ENCODE measurements at regions of chr17 and their contacts with region 1.

Region 1: GRCh38 chr17:82297714-82298537 is 19.5 kb downstream of the CD7 start:
- DNase-seq: peak; percentile 80
- ATAC-seq: peak; percentile 75
- H3K4me3 ChIP-seq: peak overlapping the region; percentile 79
- H3K27ac ChIP-seq: peak overlapping the region; percentile 80
- H3K4me1 ChIP-seq: peaks cover 37% of the 10 kb centered on the region
- H3K27me3 ChIP-seq: no peaks in the 10 kb centered on the region
- CTCF ChIP-seq: 0 out of 6 replicates have a peak, but pooled peaks of 1 of the 3 experiments have one; percentile 4
- EP300 ChIP-seq: peak; percentile 91; a peak in 3 of 4 replicates
- POLR2A ChIP-seq: peak; percentile 83
- RAD21 ChIP-seq: no peak

Region 2: DNA sequence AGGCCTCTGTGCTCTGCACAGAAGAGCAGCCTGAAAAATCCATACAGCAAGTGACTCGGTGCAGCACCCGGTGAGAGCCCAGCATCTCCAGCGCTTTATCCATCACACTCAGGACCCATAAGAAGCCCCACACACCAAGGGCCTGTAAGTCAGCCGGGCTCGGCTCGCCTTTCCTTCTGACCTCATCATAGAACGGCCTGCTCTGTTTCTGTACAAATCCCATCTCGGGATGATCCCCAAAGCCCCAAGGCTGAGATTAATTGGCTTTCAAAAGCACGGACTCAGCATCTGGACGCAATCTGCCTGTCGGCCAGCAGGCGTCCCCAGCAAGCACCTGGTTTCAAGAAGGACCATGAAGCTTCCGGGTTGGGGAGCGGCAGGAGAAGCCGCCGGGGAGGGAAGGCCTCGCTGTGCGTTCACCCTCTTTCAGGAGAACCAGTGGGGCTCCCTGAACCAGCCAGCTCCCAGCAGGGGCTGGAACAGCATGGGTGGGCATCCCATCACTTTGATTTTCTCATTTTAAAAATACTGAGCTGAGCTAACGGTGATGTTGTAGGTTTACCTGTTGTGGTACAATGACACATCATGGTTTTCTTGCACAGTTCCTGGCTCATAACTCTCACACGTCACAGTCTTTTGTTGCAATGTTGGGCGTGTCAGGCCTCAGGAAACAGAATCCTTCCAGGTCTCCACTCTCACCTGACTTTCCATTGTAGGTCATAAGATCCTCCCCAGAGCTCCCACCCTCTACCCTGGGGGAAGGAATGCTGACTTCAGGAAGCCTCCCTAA is 92.0 kb before region 1 on chr17:
- CTCF ChIA-PET with region 1: interaction called, 22 read pairs
- POLR2A ChIA-PET with region 1: interaction called, 10 read pairs
- RAD21 ChIA-PET with region 1: interaction called, 7 read pairs
- SMC1A ChIA-PET with region 1: interaction called, 10 read pairs
- in situ Hi-C with region 1: no loop called
- intact Hi-C with region 1: no loop called
- DNase-seq: no peak
- ATAC-seq: peak; percentile 96
- H3K4me3 ChIP-seq: peak overlapping the region; percentile 38; the same call in 1 of the 2 replicates
- H3K27ac ChIP-seq: peak overlapping the region; percentile 78
- H3K4me1 ChIP-seq: peaks cover 9% of the 10 kb centered on the region
- H3K27me3 ChIP-seq: no peaks in the 10 kb centered on the region
- CTCF ChIP-seq: peak; percentile 96 to 97 (median 97)
- EP300 ChIP-seq: no peak
- POLR2A ChIP-seq: peak; percentile 97
- RAD21 ChIP-seq: peak; percentile 67

Region 3: GRCh38 chr17:82230627-82231311 is 67.2 kb before region 1 on chr17:
- CTCF ChIA-PET with region 1: interaction called, 14 read pairs
- POLR2A ChIA-PET with region 1: interaction called, 17 read pairs
- RAD21 ChIA-PET with region 1: interaction called, 6 read pairs
- SMC1A ChIA-PET with region 1: interaction called, 3 read pairs
- in situ Hi-C with region 1: no loop called
- intact Hi-C with region 1: no loop called
- DNase-seq: no peak
- ATAC-seq: peak; percentile 78
- H3K4me3 ChIP-seq: peak overlapping the region; percentile 99
- H3K27ac ChIP-seq: peak overlapping the region; percentile 73; the same call in 1 of the 2 replicates
- H3K4me1 ChIP-seq: peaks cover 37% of the 10 kb centered on the region
- H3K27me3 ChIP-seq: no peaks in the 10 kb centered on the region
- CTCF ChIP-seq: peak; percentile 18 to 50 (median 42); a peak in 5 of 6 replicates
- EP300 ChIP-seq: no peak
- POLR2A ChIP-seq: peak; percentile 39; the same call in 1 of the 2 replicates
- RAD21 ChIP-seq: no peak

Region 4: DNA sequence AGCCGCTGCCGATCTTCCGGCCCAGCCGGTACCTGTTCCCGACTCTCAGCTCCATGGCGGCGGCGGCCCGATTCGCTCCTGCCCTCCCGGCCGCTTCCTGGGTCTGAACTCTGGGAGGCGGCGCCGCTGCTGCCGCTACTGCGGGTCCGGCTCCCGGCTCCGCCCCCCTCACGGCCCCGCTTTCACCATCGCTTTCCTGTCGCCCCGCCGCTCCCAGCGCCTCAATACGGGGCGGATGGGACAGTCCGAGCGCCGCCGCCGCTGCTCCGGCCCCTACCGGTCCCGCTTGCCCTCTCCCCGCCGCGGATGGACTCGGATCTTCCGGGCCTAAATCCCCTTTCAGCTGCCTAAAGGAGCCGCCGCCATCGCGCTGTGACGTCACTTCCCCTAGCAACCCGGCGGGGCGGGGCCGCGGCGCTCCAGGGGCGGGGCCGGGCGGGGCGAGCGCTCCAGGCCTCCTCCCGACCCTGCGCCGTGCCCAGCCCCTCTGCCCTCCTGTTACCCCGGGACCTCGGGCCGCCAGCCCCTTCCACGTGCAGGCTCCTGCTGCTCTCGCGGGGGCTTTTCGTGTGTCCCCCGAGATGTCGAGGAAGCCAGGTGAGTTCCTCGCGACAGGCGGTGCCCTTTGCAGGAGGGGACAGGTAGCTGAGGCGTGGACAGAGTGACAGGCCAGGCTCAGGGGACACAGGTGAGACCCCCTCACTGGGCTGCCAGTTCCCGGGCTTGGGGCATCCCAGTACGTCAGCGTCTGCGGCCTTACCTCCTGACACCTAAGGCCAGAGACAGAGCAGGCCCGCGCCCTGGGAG is 24.4 kb before region 1 on chr17 and contains the start of gene CSNK1D:
- CTCF ChIA-PET with region 1: interaction called, 4 read pairs
- POLR2A ChIA-PET with region 1: interaction called, 20 read pairs
- RAD21 ChIA-PET with region 1: interaction called, 4 read pairs
- SMC1A ChIA-PET with region 1: interaction called, 9 read pairs
- in situ Hi-C with region 1: no loop called
- intact Hi-C with region 1: no loop called
- DNase-seq: peak; percentile 33
- ATAC-seq: peak; percentile 85
- H3K4me3 ChIP-seq: peak within 1 kb of the TSS; percentile 94
- H3K27ac ChIP-seq: peak within 1 kb of the TSS; percentile 92
- H3K4me1 ChIP-seq: peaks cover 12% of the 10 kb centered on the region
- H3K27me3 ChIP-seq: no peaks in the 10 kb centered on the region
- CTCF ChIP-seq: no peak
- EP300 ChIP-seq: no peak
- POLR2A ChIP-seq: peak; percentile 89
- RAD21 ChIP-seq: no peak
- polyA plus RNA-seq, gene CSNK1D: 5.7 to 13.0 TPM

Region 5: DNA sequence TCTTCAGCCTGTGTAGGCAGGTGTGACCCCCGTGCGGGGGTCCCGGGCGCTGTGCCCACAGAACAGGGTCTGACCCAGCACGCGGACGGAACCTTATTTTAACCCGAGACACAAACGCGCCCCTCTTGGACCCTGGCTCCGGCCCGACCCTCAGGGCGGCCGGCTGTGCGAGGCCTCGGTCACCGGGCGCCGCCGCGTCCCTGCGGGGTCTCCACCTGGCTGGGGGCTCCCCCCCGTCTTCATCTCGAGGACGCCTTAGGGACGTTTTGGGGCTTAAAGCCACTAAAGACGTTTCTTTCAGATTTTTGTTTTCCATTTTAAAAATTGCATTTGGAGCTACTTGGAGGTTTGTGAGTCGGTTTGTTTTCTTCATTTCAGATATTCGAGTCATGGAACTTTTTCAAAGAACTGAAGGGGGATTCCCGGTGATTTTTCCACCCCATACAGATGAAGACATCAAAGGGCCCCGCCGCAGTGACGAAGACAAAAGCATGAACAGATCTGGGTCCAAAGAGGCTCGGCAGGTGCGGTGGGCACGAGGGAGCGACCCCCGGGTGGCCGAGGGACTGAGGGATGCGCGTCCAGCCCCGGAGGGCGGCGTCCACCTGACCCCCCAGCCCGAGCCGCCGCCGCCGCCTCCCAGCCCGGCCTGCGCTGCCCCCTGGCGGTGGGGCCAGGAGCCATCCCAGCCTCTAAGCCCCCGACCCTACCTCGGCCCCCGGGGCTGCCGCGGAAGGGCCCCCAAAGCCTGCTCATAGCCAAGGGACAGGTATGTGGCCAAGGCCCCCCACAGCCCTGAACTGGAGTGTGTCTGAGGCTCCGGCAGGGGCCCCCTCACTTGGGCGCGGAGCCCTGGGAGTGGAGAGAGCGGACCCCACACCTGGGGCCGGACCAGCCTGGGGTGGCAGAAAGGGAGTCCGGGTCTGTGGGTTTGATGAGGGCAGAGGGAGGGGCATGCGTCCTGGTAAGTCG is 23.3 kb after region 1 on chr17:
- CTCF ChIA-PET with region 1: interaction called, 94 read pairs
- POLR2A ChIA-PET with region 1: interaction called, 32 read pairs
- RAD21 ChIA-PET with region 1: interaction called, 77 read pairs
- SMC1A ChIA-PET with region 1: interaction called, 42 read pairs
- in situ Hi-C with region 1: no loop called
- intact Hi-C with region 1: loop called (anchors 1 kb)
- DNase-seq: no peak
- ATAC-seq: peak; percentile 88
- H3K4me3 ChIP-seq: peak overlapping the region; percentile 41; the same call in 1 of the 2 replicates
- H3K27ac ChIP-seq: no peak overlapping the region
- H3K4me1 ChIP-seq: no peaks in the 10 kb centered on the region; the same call in 1 of the 2 replicates
- H3K27me3 ChIP-seq: no peaks in the 10 kb centered on the region; a peak in 1 of 4 replicates
- CTCF ChIP-seq: peak; percentile 66 to 78 (median 77)
- EP300 ChIP-seq: no peak
- POLR2A ChIP-seq: no peak
- RAD21 ChIP-seq: peak; percentile 66